HepG2 (cell line): ENCODE measurements at regions of chr11 and their contacts with region 1.

Region 1: GRCh38 chr11:71240865-71241691 is 11.3 kb downstream of the SHANK2 start:
- DNase-seq: peak; percentile 93
- ATAC-seq: peak; percentile 85
- H3K4me3 ChIP-seq: peak overlapping the region; percentile 18 to 44 (median 19); a peak in 3 of 6 replicates
- H3K27ac ChIP-seq: peak overlapping the region; percentile 88
- H3K4me1 ChIP-seq: peaks cover 68% of the 10 kb centered on the region
- H3K27me3 ChIP-seq: no peaks in the 10 kb centered on the region
- CTCF ChIP-seq: peak; percentile 16; the same call in 1 of the 2 replicates
- EP300 ChIP-seq: peak; percentile 76 to 87; a peak in 3 of 4 replicates
- POLR2A ChIP-seq: peak in 1 of 2 experiments; percentile 41; a peak in 1 of 4 replicates
- RAD21 ChIP-seq: no peak

Region 2: DNA sequence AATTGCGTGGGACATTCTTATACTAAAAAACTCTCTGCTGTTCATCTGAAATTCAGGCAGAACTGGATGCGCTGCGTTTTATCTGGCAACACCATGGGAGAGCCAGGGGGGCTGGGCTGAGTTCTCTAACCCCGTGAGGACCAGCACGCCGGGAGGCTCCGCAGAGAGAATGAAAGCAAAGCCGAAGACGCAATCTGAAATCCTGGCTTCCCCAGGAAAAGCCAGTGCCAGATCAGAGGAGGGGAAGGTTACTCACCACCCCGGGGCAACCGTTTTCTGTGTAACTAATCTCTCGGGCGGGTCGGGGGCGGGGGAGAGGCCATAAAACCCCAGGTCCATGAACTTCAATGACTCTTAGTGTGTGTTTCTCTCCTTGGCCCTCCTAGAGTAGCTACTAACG is 88.1 kb before region 1 on chr11:
- CTCF ChIA-PET with region 1: no interaction called
- POLR2A ChIA-PET with region 1: interaction called, 6 read pairs
- in situ Hi-C with region 1: no loop called
- intact Hi-C with region 1: loop called (anchors 10 kb)
- DNase-seq: peak; percentile 46
- ATAC-seq: peak; percentile 65
- H3K4me3 ChIP-seq: peak overlapping the region; percentile 30 to 58 (median 48); a peak in 5 of 6 replicates
- H3K27ac ChIP-seq: peak overlapping the region; percentile 88
- H3K4me1 ChIP-seq: peaks cover 47% of the 10 kb centered on the region
- H3K27me3 ChIP-seq: no peaks in the 10 kb centered on the region
- CTCF ChIP-seq: no peak
- EP300 ChIP-seq: no peak
- POLR2A ChIP-seq: no peak
- RAD21 ChIP-seq: no peak